B cell (primary cell): ENCODE measurements at regions of chr1 and their contacts with region 1.

Region 1: GRCh38 chr1:244239261-244239770 is 188.2 kb downstream of the ZBTB18 start:
- DNase-seq: no peak
- ATAC-seq: no peak
- H3K4me3 ChIP-seq: no peak overlapping the region
- H3K4me3 Mint-ChIP-seq: no peak overlapping the region
- H3K27ac ChIP-seq: no peak overlapping the region
- H3K27ac Mint-ChIP-seq: no peak overlapping the region
- H3K4me1 ChIP-seq: peaks cover 11 to 17% of the 10 kb centered on the region in 2 donors
- H3K4me1 Mint-ChIP-seq: peaks cover 32% of the 10 kb centered on the region
- H3K27me3 ChIP-seq: no peaks in the 10 kb centered on the region
- H3K27me3 Mint-ChIP-seq: no peaks in the 10 kb centered on the region
- CTCF ChIP-seq: no peak

Region 2: GRCh38 chr1:244256086-244256676 is 16.9 kb after region 1 on chr1:
- CTCF ChIA-PET with region 1: interaction called, 3 read pairs
- POLR2A ChIA-PET with region 1: interaction called, 12 read pairs
- intact Hi-C with region 1: no loop called
- DNase-seq: no peak
- ATAC-seq: no peak
- H3K4me3 ChIP-seq: no peak overlapping the region
- H3K4me3 Mint-ChIP-seq: no peak overlapping the region
- H3K27ac ChIP-seq: no peak overlapping the region
- H3K27ac Mint-ChIP-seq: peak overlapping the region; percentile 37
- H3K4me1 ChIP-seq: peaks cover 43 to 52% of the 10 kb centered on the region in 2 donors
- H3K4me1 Mint-ChIP-seq: peaks cover 46% of the 10 kb centered on the region
- H3K27me3 ChIP-seq: no peaks in the 10 kb centered on the region
- H3K27me3 Mint-ChIP-seq: no peaks in the 10 kb centered on the region
- CTCF ChIP-seq: no peak